ENCODE measurements at regions of chr2 and their contacts with region 1.

Region 1: DNA sequence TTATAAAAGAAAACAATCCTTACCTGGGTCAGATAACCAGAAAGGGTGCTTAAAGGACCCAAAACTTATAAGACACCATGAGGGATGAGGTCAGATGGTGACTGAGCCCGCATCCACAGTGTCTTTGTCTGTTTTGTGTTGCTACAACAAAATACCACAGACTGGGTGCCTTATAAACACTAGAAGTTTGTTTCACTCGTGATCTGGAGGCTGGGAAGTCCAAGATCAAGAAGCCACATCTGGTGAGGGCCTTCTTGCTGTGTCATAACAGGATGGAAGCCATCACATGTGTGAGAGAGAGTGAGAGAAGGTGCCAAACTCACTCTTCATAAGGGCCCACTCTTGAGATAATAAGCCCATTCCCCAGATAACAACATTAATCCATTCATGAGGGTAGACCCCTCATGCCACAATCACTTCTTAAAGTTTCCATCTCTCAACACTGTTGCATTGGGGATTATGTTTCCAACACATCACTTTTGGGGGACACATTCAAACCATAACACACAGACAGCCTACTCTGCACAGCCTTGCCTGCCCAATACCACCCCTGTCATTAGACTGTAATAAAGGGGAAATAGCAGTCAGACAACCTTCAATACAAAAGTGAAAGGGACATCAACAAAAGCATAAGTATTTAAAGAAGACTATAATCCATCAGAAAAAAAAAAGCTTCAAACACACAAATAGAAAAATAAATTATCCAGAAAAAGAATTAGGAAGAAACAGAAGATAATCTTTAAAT is 249.8 kb downstream of the ANAPC1 start:
- DNase-seq: no peak
- H3K4me3 ChIP-seq: no peak overlapping the region
- H3K27me3 ChIP-seq: peaks cover 1% of the 10 kb centered on the region
- CTCF ChIP-seq: no peak

Region 2: GRCh38 chr2:110910423-110910822 is 723.8 kb before region 1 on chr2:
- CTCF ChIA-PET with region 1: no interaction called
- POLR2A ChIA-PET with region 1: no interaction called
- DNase-seq: no peak
- H3K4me3 ChIP-seq: no peak overlapping the region
- H3K27me3 ChIP-seq: no peaks in the 10 kb centered on the region
- CTCF ChIP-seq: no peak

Region 3: DNA sequence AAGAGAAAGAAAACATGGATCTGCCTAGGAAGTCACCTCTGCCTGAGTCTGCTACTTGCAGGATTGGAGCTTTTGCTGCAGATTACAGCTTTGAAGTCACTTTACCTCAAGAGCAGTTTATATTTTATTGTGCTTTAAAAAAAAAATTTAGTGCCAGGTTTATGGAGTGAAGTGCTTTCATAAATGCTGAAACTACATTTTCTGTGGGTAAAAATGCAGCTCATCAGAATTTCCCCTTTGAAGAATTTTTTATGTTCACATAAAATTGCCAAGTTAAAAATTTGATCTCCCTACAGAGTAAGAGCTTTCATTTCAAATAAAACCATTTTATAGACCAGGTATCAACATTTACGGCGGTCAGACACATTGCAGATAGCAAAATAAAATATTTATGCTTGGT is 488.3 kb before region 1 on chr2:
- CTCF ChIA-PET with region 1: no interaction called
- POLR2A ChIA-PET with region 1: interaction called, 10 read pairs
- DNase-seq: no peak
- H3K4me3 ChIP-seq: no peak overlapping the region
- H3K27me3 ChIP-seq: no peaks in the 10 kb centered on the region; the same call in 1 of the 2 replicates
- CTCF ChIP-seq: no peak

Region 4: DNA sequence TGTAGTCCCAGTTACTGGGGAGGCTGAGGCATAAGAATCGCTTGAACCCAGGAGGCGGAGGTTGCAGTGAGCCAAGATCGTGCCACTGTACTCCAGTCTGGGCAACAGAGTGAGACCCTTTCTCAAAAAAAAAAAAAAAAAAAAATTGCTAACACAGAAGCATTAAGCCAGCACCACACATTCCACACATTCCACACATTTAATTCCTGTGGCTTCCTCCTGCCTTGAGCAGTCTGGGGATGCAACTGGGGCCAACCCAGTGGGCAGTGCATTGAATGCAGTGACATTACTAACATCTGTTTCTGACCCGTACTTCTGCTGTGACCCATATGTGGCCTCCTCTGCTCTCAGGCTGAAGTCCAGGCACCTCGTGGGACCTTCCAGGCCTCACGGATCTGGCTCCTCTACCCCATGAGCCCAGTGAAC is 406.5 kb before region 1 on chr2:
- CTCF ChIA-PET with region 1: no interaction called
- POLR2A ChIA-PET with region 1: no interaction called
- DNase-seq: peak; percentile 41
- H3K4me3 ChIP-seq: no peak overlapping the region
- H3K27me3 ChIP-seq: no peaks in the 10 kb centered on the region
- CTCF ChIP-seq: no peak

Measured in BJ (cell line).